ENCODE measurements at regions of chr1 and their contacts with region 1.

Region 1: DNA sequence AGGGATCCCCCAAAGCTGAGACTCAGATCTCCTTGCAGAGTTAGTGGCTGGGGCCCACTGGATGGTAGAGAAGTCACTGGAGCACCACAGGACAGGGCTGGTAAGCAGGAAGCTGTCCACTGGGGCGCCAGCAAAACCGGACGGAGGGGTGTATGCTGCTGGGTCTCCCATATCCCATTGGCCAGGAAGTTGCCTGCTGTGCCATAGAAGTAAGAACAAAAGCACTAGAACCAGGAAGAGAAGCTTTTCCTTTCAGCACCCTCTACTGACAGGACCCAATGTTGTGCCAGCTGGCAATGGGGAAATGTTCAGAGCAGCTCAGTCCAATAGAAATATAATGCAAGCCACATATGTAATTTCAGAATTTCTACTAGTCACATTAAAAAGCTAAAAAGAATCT is 146.6 kb downstream of the SPATA46 start:
- DNase-seq: peak in 3 of 5 donors; percentile 29 to 45 (median 41)
- ATAC-seq: peak; percentile 76 to 89 (median 81)
- H3K4me3 ChIP-seq: no peak overlapping the region
- H3K27ac ChIP-seq: peak overlapping the region in 2 of 12 donors; percentile 10 to 35
- H3K4me1 ChIP-seq: peaks cover 0 to 22% (median 0%) of the 10 kb centered on the region in 12 donors
- H3K27me3 ChIP-seq: no peaks in the 10 kb centered on the region
- CTCF ChIP-seq: peak in 7 of 12 donors; percentile 6 to 47 (median 32)
- POLR2A ChIP-seq: no peak

Region 2: DNA sequence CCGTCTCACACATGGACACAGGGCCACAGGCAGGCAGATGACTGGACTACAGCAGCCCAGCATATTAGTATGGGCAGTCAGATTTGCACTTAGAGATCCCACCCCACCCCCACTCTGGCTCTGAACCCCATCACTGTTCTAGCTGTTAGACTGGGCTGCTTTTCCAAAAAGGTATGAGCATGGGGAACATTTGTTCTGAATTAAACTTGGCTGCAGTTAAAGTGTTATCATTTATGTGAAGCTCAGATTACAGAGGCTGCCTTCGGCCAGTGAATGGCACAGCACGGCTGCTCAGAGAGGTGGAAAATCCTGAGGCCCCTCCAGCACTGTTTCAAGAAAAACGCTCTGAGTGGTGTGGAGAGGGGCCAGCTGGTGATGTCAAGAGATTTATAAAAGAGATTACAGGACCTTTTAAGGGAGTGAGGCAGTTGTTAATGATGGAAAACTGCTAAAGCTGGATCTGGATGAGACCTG is 167.5 kb before region 1 on chr1:
- intact Hi-C with region 1: loop called in 2 of 10 experiments (anchors 5 kb)
- DNase-seq: peak in 4 of 5 donors; percentile 9 to 58 (median 42)
- ATAC-seq: peak; percentile 81 to 90 (median 83)
- H3K4me3 ChIP-seq: no peak overlapping the region
- H3K27ac ChIP-seq: peak overlapping the region in 7 of 12 donors; percentile 12 to 68 (median 48)
- H3K4me1 ChIP-seq: peaks cover 0 to 17% (median 1%) of the 10 kb centered on the region in 12 donors
- H3K27me3 ChIP-seq: peaks cover 0 to 17% (median 0%) of the 10 kb centered on the region in 9 donors
- CTCF ChIP-seq: no peak
- POLR2A ChIP-seq: no peak

Region 3: DNA sequence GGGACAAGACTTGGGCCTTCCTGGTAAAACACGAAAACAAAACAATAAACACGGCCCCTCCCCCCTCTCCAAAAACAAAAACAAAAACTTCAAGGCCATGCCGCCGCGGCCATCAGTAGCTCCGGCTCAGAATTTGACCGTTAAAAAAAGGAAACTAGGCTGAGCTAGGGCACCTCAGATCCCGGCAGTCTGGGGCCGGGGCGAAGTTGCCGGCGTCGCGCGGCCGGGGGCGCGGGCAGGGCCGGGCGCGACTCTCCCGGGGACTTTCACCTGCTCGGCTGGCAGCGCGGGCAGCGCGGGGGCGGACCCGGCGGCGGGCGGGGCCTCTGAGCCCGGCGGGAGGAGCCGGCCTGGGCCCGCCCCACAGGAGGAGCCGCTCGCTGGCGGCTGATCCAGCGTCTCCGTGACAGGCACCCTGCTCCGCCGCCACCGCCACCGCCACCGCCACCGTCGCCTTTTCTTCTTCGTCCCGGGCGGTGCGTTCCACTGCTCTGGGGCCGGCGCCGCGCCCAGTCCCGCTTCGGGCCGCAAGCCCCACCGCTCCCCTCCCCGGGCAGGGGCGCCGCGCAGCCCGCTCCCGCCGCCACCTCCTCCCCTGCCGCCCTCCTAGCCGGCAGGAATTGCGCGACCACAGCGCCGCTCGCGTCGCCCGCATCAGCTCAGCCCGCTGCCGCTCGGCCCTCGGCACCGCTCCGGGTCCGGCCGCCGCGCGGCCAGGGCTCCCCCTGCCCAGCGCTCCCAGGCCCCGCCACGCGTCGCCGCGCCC is 160.6 kb before region 1 on chr1 and contains the start of gene NOS1AP:
- intact Hi-C with region 1: loop called in 2 of 10 experiments (anchors 5 kb)
- DNase-seq: peak; percentile 76 to 91 (median 86)
- ATAC-seq: peak; percentile 90 to 99 (median 96)
- H3K4me3 ChIP-seq: peak within 1 kb of the TSS; percentile 51 to 86 (median 67)
- H3K27ac ChIP-seq: peak within 1 kb of the TSS in 10 of 12 donors; percentile 54 to 81 (median 70)
- H3K4me1 ChIP-seq: peaks cover 0 to 38% (median 7%) of the 10 kb centered on the region in 12 donors
- H3K27me3 ChIP-seq: peaks cover 0 to 71% (median 4%) of the 10 kb centered on the region in 9 donors
- CTCF ChIP-seq: peak in 1 of 12 donors; percentile 19
- POLR2A ChIP-seq: peak in 1 of 2 donors; percentile 65
- total RNA-seq, gene NOS1AP: 2.4 to 6.4 (median 4.5) TPM

Region 4: DNA sequence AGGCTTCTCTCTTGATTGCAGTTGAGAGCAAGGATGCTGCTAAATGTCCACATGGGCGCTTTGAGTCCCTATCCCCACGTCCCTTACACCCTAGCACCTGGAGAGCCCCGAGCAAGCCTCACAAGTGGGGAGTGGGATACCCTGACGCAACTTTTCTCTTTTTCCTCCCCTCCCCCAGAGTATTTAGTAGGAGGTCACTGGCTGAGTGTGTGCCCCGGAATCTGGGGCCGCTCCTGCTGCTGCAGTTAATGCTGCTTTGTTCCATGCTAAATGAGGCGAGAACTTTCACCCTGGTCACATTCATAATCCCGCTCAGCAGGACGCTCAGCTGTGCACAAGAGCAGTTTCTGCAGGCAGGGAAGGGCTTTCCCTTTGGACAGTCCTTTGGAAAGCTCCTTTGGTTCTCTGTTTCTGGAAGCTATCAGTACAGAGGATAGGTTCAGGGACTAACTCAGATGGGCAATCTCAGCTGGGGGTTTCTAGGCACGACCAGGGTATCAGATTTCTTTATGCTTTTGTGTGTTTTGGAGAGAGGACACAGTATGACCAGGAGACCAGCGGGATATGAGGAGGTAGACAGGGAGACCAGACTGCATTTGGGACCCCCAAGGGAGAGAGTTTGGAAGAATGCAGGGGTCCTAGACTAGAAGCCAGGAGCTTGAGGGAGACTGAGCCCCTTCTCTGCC is 84.7 kb before region 1 on chr1:
- intact Hi-C with region 1: no loop called
- DNase-seq: no peak
- ATAC-seq: no peak
- H3K4me3 ChIP-seq: no peak overlapping the region
- H3K27ac ChIP-seq: no peak overlapping the region
- H3K4me1 ChIP-seq: peaks cover 0 to 10% (median 0%) of the 10 kb centered on the region in 12 donors
- H3K27me3 ChIP-seq: no peaks in the 10 kb centered on the region
- CTCF ChIP-seq: no peak
- POLR2A ChIP-seq: no peak

Region 5: GRCh38 chr1:162391790-162392563 is 161.9 kb after region 1 on chr1:
- intact Hi-C with region 1: loop called in 1 of 10 experiments (anchors 10 kb)
- DNase-seq: no peak
- ATAC-seq: peak in 1 of 4 donors; percentile 60
- H3K4me3 ChIP-seq: no peak overlapping the region
- H3K27ac ChIP-seq: no peak overlapping the region
- H3K4me1 ChIP-seq: peaks cover 0 to 4% (median 0%) of the 10 kb centered on the region in 12 donors
- H3K27me3 ChIP-seq: peaks cover 0 to 21% (median 0%) of the 10 kb centered on the region in 9 donors
- CTCF ChIP-seq: peak; percentile 67 to 87 (median 78)
- POLR2A ChIP-seq: no peak

Region 6: GRCh38 chr1:162422662-162423375 is 192.7 kb after region 1 on chr1:
- intact Hi-C with region 1: no loop called
- DNase-seq: no peak
- ATAC-seq: peak in 1 of 4 donors; percentile 58
- H3K4me3 ChIP-seq: no peak overlapping the region
- H3K27ac ChIP-seq: no peak overlapping the region
- H3K4me1 ChIP-seq: peaks cover 0 to 40% (median 0%) of the 10 kb centered on the region in 12 donors
- H3K27me3 ChIP-seq: no peaks in the 10 kb centered on the region
- CTCF ChIP-seq: no peak
- POLR2A ChIP-seq: no peak